ENCODE measurements at regions of chr10 and their contacts with region 1.

Region 1: DNA sequence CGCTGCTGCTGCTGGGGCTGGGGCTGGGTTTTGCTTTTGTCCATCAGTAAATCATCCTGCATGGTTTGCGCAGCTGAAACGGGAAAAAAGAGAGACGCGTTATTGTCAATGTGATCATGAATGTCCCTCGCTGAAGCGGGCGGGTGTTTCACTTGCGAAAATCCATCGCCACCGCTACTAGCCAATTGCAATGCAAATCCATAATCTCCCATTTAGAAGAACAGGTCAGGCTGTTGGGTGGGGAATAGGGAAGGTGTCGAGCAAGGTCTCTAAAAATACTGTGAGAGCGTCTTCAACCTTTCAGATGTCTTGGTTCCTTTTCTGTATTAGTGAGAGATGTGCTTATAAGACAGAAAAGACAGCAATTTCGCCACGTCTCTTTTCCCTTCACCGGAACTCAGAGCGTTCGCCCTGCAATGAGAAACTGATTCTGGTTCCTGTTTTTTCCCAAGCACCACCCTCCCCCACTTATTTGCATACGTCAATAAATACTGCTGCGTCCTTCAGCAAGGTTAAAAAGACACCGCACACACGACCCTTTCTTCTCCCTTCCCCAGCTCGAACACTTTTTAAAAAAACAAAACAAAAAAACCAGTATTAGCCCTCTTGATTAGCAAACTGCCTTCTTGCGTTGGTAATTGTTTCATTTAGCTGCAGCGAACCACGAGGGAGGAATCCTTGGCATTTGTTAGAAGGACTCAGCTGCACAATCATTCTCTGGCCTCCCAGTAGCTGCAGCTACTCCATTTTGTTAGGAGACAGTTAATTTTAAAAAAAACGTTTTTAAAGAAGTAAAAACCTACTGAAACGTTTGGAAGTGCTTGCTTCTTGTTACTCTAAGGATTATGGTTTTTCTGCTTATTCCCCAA is 50.4 kb downstream of the CPEB3 start:
- DNase-seq: peak; percentile 69 to 74
- ATAC-seq: peak; percentile 71

Region 2: GRCh38 chr10:92290837-92291615 is 50.5 kb after region 1 on chr10 and contains the starts of genes CPEB3 and MARCHF5:
- intact Hi-C with region 1: loop called in 1 of 2 experiments (anchors 5 kb)
- DNase-seq: peak; percentile 97
- ATAC-seq: peak; percentile 97
- total RNA-seq, gene CPEB3: 6.9 to 9.9 TPM
- total RNA-seq, gene MARCHF5: 35.9 to 42.6 TPM